ENCODE measurements at regions of chr2 and their contacts with region 1.

Region 1: DNA sequence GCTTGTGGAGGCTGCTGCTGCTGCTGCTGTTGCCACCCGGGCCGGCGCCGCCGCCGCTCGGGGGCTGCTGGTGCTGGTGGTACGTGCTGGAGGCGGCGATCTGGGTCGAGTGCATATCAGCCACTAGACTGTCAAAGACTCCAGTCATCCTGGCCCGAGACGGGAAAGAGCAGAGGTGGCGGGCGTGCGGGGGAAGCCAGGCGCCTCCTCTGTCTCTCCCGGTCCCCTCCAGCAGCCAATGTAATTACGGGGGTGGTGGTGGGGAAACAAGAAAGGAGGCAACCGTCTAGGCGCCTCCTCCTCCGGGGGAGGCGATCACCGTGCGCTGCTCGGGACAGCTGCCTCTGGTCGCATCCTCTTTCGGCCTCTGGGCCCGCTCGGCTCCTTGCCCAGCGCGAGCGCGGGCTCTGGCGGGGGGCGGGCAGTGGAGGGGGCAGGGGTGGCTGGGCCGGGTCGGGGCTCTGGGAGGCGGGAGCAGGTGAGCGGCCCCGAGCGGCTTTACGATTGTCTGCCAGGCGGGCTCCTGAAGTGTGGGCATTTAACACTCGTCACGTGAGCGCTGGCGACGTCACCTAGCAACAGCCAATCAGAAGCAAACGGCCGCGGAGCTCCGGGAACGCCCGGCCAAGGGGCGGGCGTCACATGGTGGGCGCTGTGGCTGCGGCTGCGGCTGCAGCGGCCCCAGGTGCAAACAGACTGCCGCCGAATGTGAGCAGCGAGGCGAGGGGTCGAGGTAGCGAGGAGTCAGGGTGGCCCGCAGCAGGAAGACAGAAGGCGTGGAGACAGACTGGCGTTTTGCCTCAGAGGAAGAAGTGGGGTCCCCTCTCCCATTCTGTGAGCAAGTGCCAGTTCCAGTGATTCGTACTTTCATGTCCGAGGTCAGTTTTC is at the start of gene DLX2:
- DNase-seq: no peak
- H3K4me3 ChIP-seq: peak within 1 kb of the TSS; percentile 49
- H3K27me3 ChIP-seq: no peaks in the 10 kb centered on the region
- CTCF ChIP-seq: no peak
- polyA plus RNA-seq, gene DLX2: 0.16 and 0.20 TPM in 2 replicates

Region 2: GRCh38 chr2:171557363-171557762 is 545.3 kb before region 1 on chr2:
- CTCF ChIA-PET with region 1: no interaction called
- POLR2A ChIA-PET with region 1: no interaction called
- DNase-seq: no peak
- H3K4me3 ChIP-seq: no peak overlapping the region
- H3K27me3 ChIP-seq: no peaks in the 10 kb centered on the region
- CTCF ChIP-seq: no peak

Region 3: DNA sequence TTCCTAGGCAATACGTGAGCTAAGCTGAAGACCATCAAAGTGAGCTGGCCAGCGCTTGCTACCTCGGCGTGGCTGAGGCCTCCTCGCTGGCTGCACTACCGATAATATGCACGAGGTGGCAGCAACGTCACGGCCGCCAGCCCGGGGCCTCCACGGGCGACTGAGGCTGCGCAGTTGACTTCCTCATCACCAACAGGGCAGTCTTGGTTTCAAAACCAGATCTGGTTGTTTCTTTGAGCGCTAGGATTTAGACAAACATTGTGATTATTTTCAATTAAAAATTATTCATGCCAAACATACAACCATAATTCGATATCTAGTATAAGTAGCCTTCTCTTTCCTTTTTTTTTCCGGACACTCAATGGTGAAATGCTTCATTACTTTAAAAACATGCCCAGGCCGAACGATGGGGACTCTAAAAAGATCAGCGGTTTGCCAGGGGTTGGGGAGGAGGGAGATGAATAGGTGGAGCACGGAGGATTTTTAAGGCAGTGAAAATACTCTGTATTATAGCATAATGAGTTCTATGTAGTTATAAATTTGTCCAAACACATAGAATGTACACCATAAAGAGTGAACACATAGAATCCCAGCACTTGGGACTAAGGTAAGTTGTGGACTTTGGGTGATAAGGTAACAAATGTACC is 528.4 kb before region 1 on chr2:
- CTCF ChIA-PET with region 1: interaction called, 23 read pairs
- POLR2A ChIA-PET with region 1: no interaction called
- DNase-seq: no peak
- H3K4me3 ChIP-seq: no peak overlapping the region
- H3K27me3 ChIP-seq: no peaks in the 10 kb centered on the region
- CTCF ChIP-seq: peak; percentile 97

Measured in BJ (cell line).